ENCODE measurements at regions of chr1 and their contacts with region 1.

Region 1: GRCh38 chr1:220527908-220528678 is at the start of gene MARK1:
- DNase-seq: peak in 1 of 2 donors; percentile 80
- H3K4me3 ChIP-seq: peak within 1 kb of the TSS; percentile 85 to 86
- H3K27ac ChIP-seq: peak within 1 kb of the TSS; percentile 85 to 89
- H3K4me1 ChIP-seq: no peaks in the 10 kb centered on the region
- H3K27me3 ChIP-seq: no peaks in the 10 kb centered on the region
- CTCF ChIP-seq: no peak
- total RNA-seq, gene MARK1: 11.6 TPM

Region 2: GRCh38 chr1:220294846-220295301 is 233.2 kb before region 1 on chr1:
- intact Hi-C with region 1: loop called (anchors 5 kb)
- DNase-seq: no peak
- H3K4me3 ChIP-seq: no peak overlapping the region
- H3K27ac ChIP-seq: no peak overlapping the region
- H3K4me1 ChIP-seq: no peaks in the 10 kb centered on the region
- H3K27me3 ChIP-seq: no peaks in the 10 kb centered on the region
- CTCF ChIP-seq: no peak

Region 3: DNA sequence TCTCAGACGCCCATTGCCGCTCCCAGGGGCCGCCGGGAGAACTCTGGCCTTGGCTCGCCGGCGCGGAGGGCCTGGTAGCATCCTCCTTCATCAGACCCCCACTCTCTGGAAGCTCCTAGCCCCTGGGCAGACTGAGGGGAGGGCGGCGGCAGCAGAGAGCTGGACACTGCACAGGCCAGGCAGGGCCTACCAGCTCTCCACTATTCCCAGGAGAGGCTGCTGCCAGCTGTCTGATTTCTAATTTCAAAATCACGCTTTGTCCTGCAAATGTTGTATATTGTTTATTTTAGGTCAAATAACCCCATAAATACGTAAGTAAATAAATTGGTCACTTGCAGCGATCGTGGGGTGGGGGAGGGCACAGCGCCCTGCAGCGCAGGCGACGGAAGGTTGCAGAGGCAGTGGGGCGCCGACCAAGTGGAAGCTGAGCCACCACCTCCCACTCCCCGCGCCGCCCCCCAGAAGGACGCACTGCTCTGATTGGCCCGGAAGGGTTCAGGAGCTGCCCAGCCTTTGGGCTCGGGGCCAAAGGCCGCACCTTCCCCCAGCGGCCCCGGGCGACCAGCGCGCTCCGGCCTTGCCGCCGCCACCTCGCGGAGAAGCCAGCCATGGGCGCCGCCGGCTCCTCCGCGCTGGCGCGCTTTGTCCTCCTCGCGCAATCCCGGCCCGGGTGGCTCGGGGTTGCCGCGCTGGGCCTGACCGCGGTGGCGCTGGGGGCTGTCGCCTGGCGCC is 258.4 kb after region 1 on chr1 and contains the start of gene MTARC1:
- intact Hi-C with region 1: loop called (anchors 5 kb)
- DNase-seq: peak in 1 of 2 donors; percentile 81
- H3K4me3 ChIP-seq: peak within 1 kb of the TSS; percentile 78
- H3K27ac ChIP-seq: peak within 1 kb of the TSS; percentile 73 to 77
- H3K4me1 ChIP-seq: peaks cover 7 to 18% of the 10 kb centered on the region in 2 donors
- H3K27me3 ChIP-seq: no peaks in the 10 kb centered on the region
- CTCF ChIP-seq: peak in 1 of 3 experiments; percentile 5
- total RNA-seq, gene MTARC1: 2.2 TPM